Lower leg skin (tissue), 4 donors: ENCODE measurements at regions of chr4 and their contacts with region 1.

Region 1: DNA sequence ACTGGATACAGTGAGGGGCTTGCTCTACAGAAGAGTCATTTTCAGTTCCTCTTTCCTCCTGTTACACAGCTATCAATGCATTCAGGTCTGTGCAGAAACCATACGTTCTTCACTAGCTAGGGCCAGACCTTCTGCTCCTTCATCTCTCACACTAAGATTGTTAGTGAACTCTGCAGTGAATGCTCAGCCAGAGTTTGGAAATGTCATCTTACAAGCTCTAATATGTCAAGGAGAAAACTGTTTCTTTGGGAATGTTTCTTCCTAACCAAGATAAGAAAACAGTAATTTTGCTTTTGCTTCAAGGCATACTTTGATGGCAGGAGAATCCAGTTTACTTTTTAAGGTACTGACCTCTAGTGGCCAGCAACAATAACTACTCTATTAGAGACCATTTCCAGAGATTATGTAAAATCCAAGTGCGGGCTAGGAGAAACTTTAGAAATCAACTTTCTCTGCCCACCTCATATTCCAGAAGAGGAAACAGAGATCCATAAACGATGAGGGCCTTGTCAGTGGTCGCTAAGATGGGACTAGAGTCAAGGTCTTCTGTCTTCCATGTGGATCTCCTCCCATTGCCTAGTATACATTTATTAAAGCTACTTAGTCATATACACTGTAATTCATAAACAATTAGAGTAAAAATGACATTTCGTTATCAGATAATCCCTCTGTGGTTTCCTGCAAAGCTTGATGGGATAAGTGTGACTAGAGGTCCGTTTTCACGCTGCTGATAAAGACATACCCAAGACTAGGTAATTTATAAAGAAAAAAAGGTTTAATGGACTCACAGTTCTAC is 12.1 kb upstream of the CC2D2A start:
- DNase-seq: no peak
- H3K4me3 ChIP-seq: no peak overlapping the region
- CTCF ChIP-seq: peak in 1 of 3 donors; percentile 33
- POLR2A ChIP-seq: no peak

Region 2: DNA sequence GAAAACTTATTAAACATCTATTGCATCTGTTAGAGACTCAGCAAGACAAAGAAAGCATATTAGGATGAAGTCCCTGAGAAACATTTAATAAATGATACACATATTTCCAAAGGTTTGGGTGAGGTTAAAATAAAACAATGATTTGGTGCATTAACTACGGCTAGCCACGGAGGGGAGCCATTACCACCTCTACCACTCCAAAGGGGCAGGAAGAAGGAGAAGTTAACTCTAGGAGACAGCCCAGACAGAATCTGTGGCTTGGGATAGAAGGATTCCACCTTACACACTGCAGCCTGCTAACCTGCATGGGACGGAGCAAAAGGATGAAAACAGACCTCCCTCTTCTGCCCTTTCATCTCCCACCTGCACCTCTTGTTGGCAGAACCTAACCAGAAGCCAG is 218.9 kb before region 1 on chr4:
- intact Hi-C with region 1: loop called (anchors 5 kb)
- DNase-seq: no peak
- H3K4me3 ChIP-seq: no peak overlapping the region
- CTCF ChIP-seq: no peak
- POLR2A ChIP-seq: no peak

Region 3: GRCh38 chr4:15410750-15411149 is 46.9 kb before region 1 on chr4:
- intact Hi-C with region 1: no loop called
- DNase-seq: no peak
- H3K4me3 ChIP-seq: no peak overlapping the region
- CTCF ChIP-seq: no peak
- POLR2A ChIP-seq: no peak